Heart left ventricle (tissue), 16 donors: ENCODE measurements at regions of chr16 and their contacts with region 1.

Region 1: DNA sequence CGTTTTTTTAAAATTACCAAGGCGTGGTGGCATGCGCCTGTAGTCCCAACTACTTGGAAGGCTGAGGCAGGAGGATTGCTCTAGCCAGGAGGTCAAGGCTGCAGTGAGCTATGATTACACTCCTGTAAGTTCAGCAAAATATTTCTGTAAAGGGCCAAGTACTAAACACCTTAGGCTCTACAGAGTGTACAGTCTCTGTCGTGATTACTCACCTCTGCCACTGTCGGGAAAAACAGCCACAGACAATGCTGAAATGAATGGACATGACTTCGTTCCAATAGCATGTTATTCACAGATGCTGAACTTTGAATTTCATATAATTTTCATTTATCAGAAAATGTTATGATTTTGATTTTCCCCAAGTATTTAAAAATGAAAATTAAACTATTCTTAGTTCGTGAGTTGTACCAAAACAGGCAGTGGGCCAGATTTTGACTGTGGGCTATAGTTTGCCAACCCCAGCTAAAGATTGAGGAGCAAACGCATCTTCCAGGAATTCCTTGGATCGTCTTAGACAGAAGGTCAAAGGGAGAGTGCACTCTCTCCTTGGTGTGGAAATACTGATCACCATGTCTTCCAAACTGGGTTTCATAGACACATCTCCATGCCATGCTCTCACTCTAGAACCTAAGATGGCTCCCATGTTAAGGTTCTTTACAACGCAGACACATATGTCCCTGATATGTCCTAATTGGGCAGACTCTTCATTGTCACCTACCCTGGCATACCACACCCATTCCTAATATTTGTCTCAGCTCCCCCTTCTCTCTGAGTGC is 89.5 kb downstream of the MARF1 start:
- DNase-seq: no peak
- ATAC-seq: no peak
- H3K4me3 ChIP-seq: no peak overlapping the region
- H3K27ac ChIP-seq: no peak overlapping the region
- H3K4me1 ChIP-seq: peaks cover 0 to 12% (median 2%) of the 10 kb centered on the region in 12 donors
- H3K27me3 ChIP-seq: no peaks in the 10 kb centered on the region
- CTCF ChIP-seq: no peak
- POLR2A ChIP-seq: no peak

Region 2: GRCh38 chr16:13935408-13935807 is 1618.1 kb before region 1 on chr16:
- intact Hi-C with region 1: no loop called
- DNase-seq: no peak
- ATAC-seq: no peak
- H3K4me3 ChIP-seq: no peak overlapping the region
- H3K27ac ChIP-seq: no peak overlapping the region
- H3K4me1 ChIP-seq: peaks cover 0 to 11% (median 5%) of the 10 kb centered on the region in 12 donors
- H3K27me3 ChIP-seq: no peaks in the 10 kb centered on the region
- CTCF ChIP-seq: peak in 9 of 12 donors; percentile 17 to 50 (median 36)
- POLR2A ChIP-seq: no peak

Region 3: DNA sequence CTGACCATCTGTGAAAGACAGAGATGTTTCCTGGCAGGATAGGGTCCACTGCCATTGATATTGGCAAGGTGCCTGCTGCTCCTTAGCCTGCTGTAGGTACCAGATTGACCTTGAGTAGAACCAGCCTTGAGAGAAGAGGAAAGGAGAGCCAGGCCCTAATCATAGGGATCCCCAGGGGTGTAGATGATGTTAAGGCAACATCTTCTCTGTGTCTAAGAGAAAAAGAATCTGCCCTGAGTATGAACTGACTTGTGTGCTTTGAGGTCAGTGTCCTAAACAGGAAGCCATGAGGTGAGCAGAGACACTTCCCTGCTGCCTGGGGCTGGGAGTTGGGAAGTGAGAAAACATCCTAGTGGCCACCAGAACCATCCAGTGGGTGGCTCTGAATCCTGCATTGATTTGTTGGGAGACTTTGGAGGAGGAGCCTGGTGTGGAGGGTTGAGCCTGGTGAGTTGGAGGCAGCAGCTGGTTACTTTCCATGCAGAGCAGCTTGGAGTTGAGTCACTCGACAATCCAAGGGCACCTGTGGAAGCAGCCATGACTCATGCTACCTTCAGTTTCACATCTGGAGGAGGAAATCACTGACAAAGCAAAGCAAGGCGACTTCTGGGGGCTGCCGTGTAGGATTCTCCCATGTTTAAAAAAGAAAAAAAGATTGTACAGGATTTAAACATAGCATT is 71.3 kb before region 1 on chr16:
- intact Hi-C with region 1: loop called in 1 of 10 experiments (anchors 10 kb)
- DNase-seq: peak in 4 of 5 donors; percentile 46 to 68 (median 48)
- ATAC-seq: peak; percentile 26 to 95 (median 90)
- H3K4me3 ChIP-seq: no peak overlapping the region
- H3K27ac ChIP-seq: peak overlapping the region in 3 of 12 donors; percentile 1 to 37 (median 13)
- H3K4me1 ChIP-seq: peaks cover 0 to 13% (median 1%) of the 10 kb centered on the region in 12 donors
- H3K27me3 ChIP-seq: no peaks in the 10 kb centered on the region
- CTCF ChIP-seq: no peak
- POLR2A ChIP-seq: no peak

Region 4: GRCh38 chr16:15493466-15494150 is 59.9 kb before region 1 on chr16:
- intact Hi-C with region 1: loop called in 2 of 10 experiments (anchors 10 kb)
- DNase-seq: no peak
- ATAC-seq: peak in 1 of 4 donors; percentile 19
- H3K4me3 ChIP-seq: no peak overlapping the region
- H3K27ac ChIP-seq: peak overlapping the region in 7 of 12 donors; percentile 6 to 73 (median 53)
- H3K4me1 ChIP-seq: peaks cover 0 to 39% (median 21%) of the 10 kb centered on the region in 12 donors
- H3K27me3 ChIP-seq: no peaks in the 10 kb centered on the region
- CTCF ChIP-seq: no peak
- POLR2A ChIP-seq: no peak